ENCODE measurements at regions of chr11 and their contacts with region 1.

Region 1: DNA sequence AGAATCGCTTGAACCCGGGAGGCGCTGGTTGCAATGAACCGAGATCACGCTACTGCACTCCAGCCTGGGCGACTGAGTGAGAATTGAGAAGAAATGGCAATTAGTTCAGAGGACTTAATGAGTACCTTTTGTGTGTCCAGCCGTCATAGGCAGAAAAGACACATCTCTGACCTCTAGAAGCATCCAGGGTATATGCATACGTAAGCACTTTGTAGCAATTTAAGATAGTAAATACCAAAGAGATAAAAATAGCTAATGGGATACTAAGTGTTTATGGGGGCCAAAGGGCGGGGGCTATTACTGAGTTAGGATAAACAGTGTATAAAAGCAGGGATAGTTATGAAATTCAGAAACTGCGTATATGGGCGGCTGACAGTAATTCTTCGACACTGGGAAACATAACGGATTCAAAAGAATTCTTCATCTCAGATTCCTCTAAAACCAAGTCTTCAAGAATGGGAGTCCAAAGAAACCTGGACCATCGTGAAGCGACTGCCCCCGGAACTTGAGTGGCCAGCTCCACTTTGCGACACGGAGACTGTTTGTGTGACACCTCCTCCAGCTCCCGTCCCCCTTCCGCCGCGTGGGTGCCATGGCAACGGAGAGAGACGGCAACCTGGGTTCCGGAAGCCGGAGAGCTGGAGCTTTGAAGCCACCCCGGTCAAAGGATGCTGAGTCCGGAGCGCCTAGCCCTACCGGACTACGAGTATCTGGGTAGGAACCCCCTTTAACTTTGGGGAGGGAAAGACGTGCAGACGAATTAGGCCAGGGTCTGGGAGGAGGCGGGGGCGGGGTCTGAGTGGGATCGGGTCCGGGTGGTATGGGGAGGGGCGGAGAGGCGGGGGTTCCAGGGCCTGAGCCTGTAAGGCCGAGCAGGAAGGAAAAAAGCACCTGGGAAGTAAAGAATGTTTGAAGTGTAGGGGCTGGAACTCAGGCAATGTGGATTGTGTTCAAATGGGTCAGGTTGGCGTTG is at the start of gene CSTPP1:
- DNase-seq: peak; percentile 88
- ATAC-seq: peak; percentile 97
- H3K4me3 Mint-ChIP-seq: peak within 1 kb of the TSS; percentile 99
- H3K27ac Mint-ChIP-seq: peak within 1 kb of the TSS; percentile 93
- H3K4me1 Mint-ChIP-seq: peaks cover 17% of the 10 kb centered on the region
- H3K27me3 Mint-ChIP-seq: peaks cover 10% of the 10 kb centered on the region
- CTCF ChIP-seq: no peak
- total RNA-seq, gene CSTPP1: 26.2 and 29.9 TPM in 2 replicates

Region 2: DNA sequence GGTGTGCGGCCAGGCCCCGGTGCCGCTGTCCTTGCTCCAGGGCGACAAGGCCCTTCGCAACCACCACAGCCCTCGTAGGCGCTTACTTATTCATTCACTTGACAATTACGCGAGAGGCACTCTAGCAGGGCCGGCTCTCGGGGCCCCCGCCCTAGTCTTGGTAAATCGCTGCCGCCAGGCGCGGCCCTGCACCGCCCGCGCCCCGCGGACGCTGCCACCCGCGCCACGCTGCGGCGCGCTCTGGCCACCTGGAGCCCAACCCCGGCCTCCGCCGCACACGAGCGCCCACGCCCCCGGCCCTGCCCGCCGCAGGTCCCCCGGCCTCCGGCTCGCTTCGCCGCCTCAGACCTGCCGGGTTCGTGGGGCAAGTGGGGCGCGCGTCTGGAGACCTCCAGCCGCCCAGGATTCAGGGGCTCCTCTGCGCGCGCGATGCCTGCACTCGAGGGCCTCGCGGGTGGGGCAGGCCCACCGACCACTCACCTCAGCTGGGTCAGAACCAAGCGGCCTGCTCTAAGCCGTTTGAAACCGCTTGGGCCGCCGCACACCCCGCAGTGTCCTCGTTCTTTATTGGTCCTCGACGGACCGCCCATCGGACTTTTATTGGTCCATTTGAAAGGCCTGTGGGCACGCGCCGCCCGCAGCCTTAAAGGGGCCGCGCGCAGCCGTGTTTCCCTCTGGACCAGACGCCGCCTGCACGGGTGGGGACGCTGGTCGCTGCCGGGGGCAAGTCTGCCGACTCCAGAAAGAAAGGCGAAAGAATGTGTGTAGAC is 90.5 kb before region 1 on chr11 and contains the start of gene CKAP5:
- CTCF ChIA-PET with region 1: no interaction called
- POLR2A ChIA-PET with region 1: no interaction called
- intact Hi-C with region 1: loop called (anchors 2 kb)
- DNase-seq: peak; percentile 77
- ATAC-seq: peak; percentile 88
- H3K4me3 Mint-ChIP-seq: peak within 1 kb of the TSS; percentile 96
- H3K27ac Mint-ChIP-seq: peak within 1 kb of the TSS; percentile 88
- H3K4me1 Mint-ChIP-seq: peaks cover 33% of the 10 kb centered on the region
- H3K27me3 Mint-ChIP-seq: no peaks in the 10 kb centered on the region
- CTCF ChIP-seq: no peak
- total RNA-seq, gene CKAP5: 50.4 and 52.9 TPM in 2 replicates

Region 3: GRCh38 chr11:46876471-46876870 is 60.0 kb before region 1 on chr11:
- CTCF ChIA-PET with region 1: no interaction called
- POLR2A ChIA-PET with region 1: no interaction called
- intact Hi-C with region 1: no loop called
- DNase-seq: no peak
- ATAC-seq: no peak
- H3K4me3 Mint-ChIP-seq: no peak overlapping the region
- H3K27ac Mint-ChIP-seq: no peak overlapping the region
- H3K4me1 Mint-ChIP-seq: no peaks in the 10 kb centered on the region
- H3K27me3 Mint-ChIP-seq: peaks cover 4% of the 10 kb centered on the region
- CTCF ChIP-seq: no peak

Region 4: DNA sequence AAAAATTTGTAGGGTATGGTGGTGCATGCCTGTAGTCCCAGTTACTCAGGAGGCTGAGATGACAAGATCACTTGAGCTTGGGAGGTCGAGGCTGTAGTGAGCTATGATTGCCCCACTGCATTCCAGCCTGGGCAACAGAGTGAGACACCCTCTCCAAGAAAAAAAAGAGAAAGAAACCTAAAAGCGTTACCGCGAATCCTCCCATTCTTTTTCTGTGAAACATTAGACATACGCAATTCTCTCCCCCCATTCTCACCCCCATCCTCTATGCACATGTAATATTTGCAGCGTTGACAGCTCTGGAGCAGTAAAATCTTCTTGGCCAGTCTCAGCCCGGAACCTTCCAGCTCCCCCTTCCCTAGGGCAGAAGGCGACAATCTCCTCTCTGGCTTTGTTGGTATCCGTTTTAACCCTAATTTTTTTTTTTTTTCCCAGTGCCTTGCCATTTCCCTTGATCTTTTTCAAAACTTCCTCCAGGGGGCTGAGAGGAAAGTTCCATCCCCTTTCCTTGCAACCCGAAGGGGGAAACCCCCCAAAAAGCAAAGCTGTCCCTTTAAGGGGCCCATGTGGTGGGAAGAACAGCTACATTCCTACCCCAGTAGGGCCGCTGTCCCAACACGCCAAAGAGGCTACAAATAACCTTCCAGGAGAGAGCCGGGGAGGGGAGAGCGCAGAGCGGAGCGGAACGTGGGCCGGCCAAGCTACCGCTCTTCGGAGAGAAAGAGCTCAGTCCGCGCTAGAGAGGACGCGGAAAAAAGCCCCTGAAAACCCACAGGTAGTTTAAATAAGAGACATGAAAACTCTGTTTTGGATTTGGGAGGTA is 19.9 kb before region 1 on chr11:
- CTCF ChIA-PET with region 1: no interaction called
- POLR2A ChIA-PET with region 1: interaction called, 11 read pairs
- intact Hi-C with region 1: loop called (anchors 1 kb)
- DNase-seq: no peak
- ATAC-seq: peak; percentile 19
- H3K4me3 Mint-ChIP-seq: peak overlapping the region; percentile 76
- H3K27ac Mint-ChIP-seq: no peak overlapping the region
- H3K4me1 Mint-ChIP-seq: peaks cover 29% of the 10 kb centered on the region
- H3K27me3 Mint-ChIP-seq: peaks cover 62% of the 10 kb centered on the region
- CTCF ChIP-seq: no peak

Region 5: GRCh38 chr11:47248664-47249377 is 312.4 kb after region 1 on chr11 and contains the start of gene ACP2:
- CTCF ChIA-PET with region 1: no interaction called
- POLR2A ChIA-PET with region 1: interaction called, 6 read pairs
- intact Hi-C with region 1: loop called (anchors 1 kb)
- DNase-seq: peak; percentile 82
- ATAC-seq: peak; percentile 96
- H3K4me3 Mint-ChIP-seq: peak within 1 kb of the TSS; percentile 98
- H3K27ac Mint-ChIP-seq: peak within 1 kb of the TSS; percentile 98
- H3K4me1 Mint-ChIP-seq: peaks cover 21% of the 10 kb centered on the region
- H3K27me3 Mint-ChIP-seq: no peaks in the 10 kb centered on the region
- CTCF ChIP-seq: no peak
- total RNA-seq, gene ACP2: 18.7 and 22.5 TPM in 2 replicates

Measured in activated B cell treated with CpG ODN at 0.5 μM for 24 hours (primary cell).